ENCODE measurements at regions of chr12 and their contacts with region 1.

Region 1: DNA sequence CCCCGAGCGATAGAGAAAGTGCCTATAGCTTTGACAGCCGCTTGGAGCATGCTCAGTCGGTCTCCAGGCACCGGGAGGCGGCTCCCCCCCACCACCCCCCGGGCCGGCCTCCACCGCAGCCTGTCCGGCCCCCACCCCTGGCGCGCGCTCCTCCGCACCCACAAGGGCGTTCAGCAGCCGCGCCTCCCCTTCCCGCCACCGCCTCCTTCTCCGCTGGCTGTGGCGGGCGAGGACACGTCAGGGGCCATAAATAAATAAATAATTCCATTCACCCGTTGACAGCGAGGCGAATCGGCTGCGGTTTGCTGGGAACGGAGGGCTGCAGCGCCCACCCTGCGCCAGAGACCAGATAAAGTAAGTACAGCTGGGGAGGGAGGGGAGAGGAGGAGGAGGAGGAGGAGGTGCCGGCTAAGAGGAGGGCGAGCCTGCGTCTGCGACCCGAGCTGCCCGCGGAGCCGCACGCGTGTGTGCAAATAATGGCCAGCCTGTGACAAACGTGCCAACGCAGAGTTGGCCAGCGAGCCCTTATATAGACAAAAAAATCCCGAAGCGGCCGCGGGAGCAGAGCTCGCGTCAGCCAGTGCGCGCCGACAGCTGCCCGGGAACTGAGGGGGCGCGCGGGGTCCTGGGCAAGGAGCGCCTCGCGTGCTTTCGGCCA is at the start of gene SLC16A7:
- DNase-seq: peak; percentile 67
- H3K4me3 Mint-ChIP-seq: peak within 1 kb of the TSS; percentile 96
- H3K27ac Mint-ChIP-seq: peak within 1 kb of the TSS; percentile 100
- H3K4me1 Mint-ChIP-seq: peaks cover 46% of the 10 kb centered on the region
- H3K27me3 Mint-ChIP-seq: no peaks in the 10 kb centered on the region
- total RNA-seq, gene SLC16A7: 38.7 and 40.0 TPM in 2 replicates

Region 2: GRCh38 chr12:57941165-57941894 is 1654.7 kb before region 1 on chr12 and contains the start of gene ATP23:
- intact Hi-C with region 1: loop called (anchors 10 kb)
- DNase-seq: peak; percentile 86
- H3K4me3 Mint-ChIP-seq: peak within 1 kb of the TSS; percentile 89
- H3K27ac Mint-ChIP-seq: peak within 1 kb of the TSS; percentile 95
- H3K4me1 Mint-ChIP-seq: peaks cover 46% of the 10 kb centered on the region
- H3K27me3 Mint-ChIP-seq: no peaks in the 10 kb centered on the region
- total RNA-seq, gene ATP23: 7.3 and 8.7 TPM in 2 replicates

Region 3: GRCh38 chr12:59113831-59114615 is 482.0 kb before region 1 on chr12:
- intact Hi-C with region 1: loop called (anchors 5 kb)
- DNase-seq: peak; percentile 41
- H3K4me3 Mint-ChIP-seq: no peak overlapping the region
- H3K27ac Mint-ChIP-seq: no peak overlapping the region
- H3K4me1 Mint-ChIP-seq: no peaks in the 10 kb centered on the region
- H3K27me3 Mint-ChIP-seq: no peaks in the 10 kb centered on the region

Region 4: GRCh38 chr12:59583003-59583712 is 12.9 kb before region 1 on chr12:
- intact Hi-C with region 1: loop called (anchors 1 kb)
- DNase-seq: no peak
- H3K4me3 Mint-ChIP-seq: no peak overlapping the region
- H3K27ac Mint-ChIP-seq: no peak overlapping the region
- H3K4me1 Mint-ChIP-seq: peaks cover 15% of the 10 kb centered on the region
- H3K27me3 Mint-ChIP-seq: peaks cover 5% of the 10 kb centered on the region